HepG2 (cell line): ENCODE measurements at regions of chr5 and their contacts with region 1.

Region 1: GRCh38 chr5:140401362-140402257 is at the start of gene ANKHD1:
- DNase-seq: peak; percentile 100
- ATAC-seq: peak; percentile 82
- H3K4me3 ChIP-seq: peak within 1 kb of the TSS; percentile 80 to 97 (median 95)
- H3K27ac ChIP-seq: peak within 1 kb of the TSS; percentile 97
- H3K4me1 ChIP-seq: peaks cover 49% of the 10 kb centered on the region
- H3K27me3 ChIP-seq: no peaks in the 10 kb centered on the region; a peak in 1 of 5 replicates
- CTCF ChIP-seq: no peak
- EP300 ChIP-seq: no peak; a peak in 1 of 4 replicates
- POLR2A ChIP-seq: peak; percentile 90 to 92
- RAD21 ChIP-seq: peak; percentile 16; the same call in 1 of the 2 replicates
- total RNA-seq, gene ANKHD1: 69.9 and 101 TPM in 2 replicates

Region 2: GRCh38 chr5:140174465-140175366 is 226.9 kb before region 1 on chr5 and contains the start of gene CYSTM1:
- CTCF ChIA-PET with region 1: no interaction called
- POLR2A ChIA-PET with region 1: interaction called, 3 read pairs
- in situ Hi-C with region 1: no loop called
- intact Hi-C with region 1: loop called (anchors 1 kb)
- DNase-seq: peak; percentile 89
- ATAC-seq: peak; percentile 84
- H3K4me3 ChIP-seq: peak within 1 kb of the TSS; percentile 84 to 96 (median 89)
- H3K27ac ChIP-seq: peak within 1 kb of the TSS; percentile 89
- H3K4me1 ChIP-seq: peaks cover 61% of the 10 kb centered on the region
- H3K27me3 ChIP-seq: no peaks in the 10 kb centered on the region; a peak in 1 of 5 replicates
- CTCF ChIP-seq: no peak
- EP300 ChIP-seq: no peak
- POLR2A ChIP-seq: peak; percentile 74 to 81; a peak in 3 of 4 replicates
- RAD21 ChIP-seq: 0 out of 2 replicates have a peak, but pooled peaks have one; percentile 15
- total RNA-seq, gene CYSTM1: 40.0 and 52.7 TPM in 2 replicates

Region 3: GRCh38 chr5:140418862-140419520 is 17.4 kb after region 1 on chr5:
- CTCF ChIA-PET with region 1: no interaction called
- POLR2A ChIA-PET with region 1: interaction called, 6 read pairs
- in situ Hi-C with region 1: no loop called
- intact Hi-C with region 1: loop called (anchors 2 kb)
- DNase-seq: no peak
- ATAC-seq: no peak
- H3K4me3 ChIP-seq: no peak overlapping the region
- H3K27ac ChIP-seq: no peak overlapping the region
- H3K4me1 ChIP-seq: peaks cover 38% of the 10 kb centered on the region
- H3K27me3 ChIP-seq: no peaks in the 10 kb centered on the region
- CTCF ChIP-seq: no peak
- EP300 ChIP-seq: no peak
- POLR2A ChIP-seq: no peak
- RAD21 ChIP-seq: no peak

Region 4: GRCh38 chr5:140547508-140548299 is 146.1 kb after region 1 on chr5 and contains the start of gene EIF4EBP3:
- CTCF ChIA-PET with region 1: no interaction called
- POLR2A ChIA-PET with region 1: interaction called, 11 read pairs
- in situ Hi-C with region 1: no loop called
- intact Hi-C with region 1: no loop called
- DNase-seq: peak; percentile 94
- ATAC-seq: peak; percentile 94
- H3K4me3 ChIP-seq: peak within 1 kb of the TSS; percentile 21 to 69 (median 48); a peak in 5 of 6 replicates
- H3K27ac ChIP-seq: peak within 1 kb of the TSS; percentile 86
- H3K4me1 ChIP-seq: peaks cover 27% of the 10 kb centered on the region
- H3K27me3 ChIP-seq: no peaks in the 10 kb centered on the region
- CTCF ChIP-seq: peak; percentile 62
- EP300 ChIP-seq: no peak
- POLR2A ChIP-seq: peak; percentile 3 to 58
- RAD21 ChIP-seq: peak; percentile 73
- total RNA-seq, gene EIF4EBP3: 1.7 and 1.9 TPM in 2 replicates

Region 5: GRCh38 chr5:140639148-140639979 is 237.8 kb after region 1 on chr5 and contains the start of gene TMCO6:
- CTCF ChIA-PET with region 1: no interaction called
- POLR2A ChIA-PET with region 1: interaction called, 14 read pairs
- in situ Hi-C with region 1: no loop called
- intact Hi-C with region 1: loop called (anchors 10 kb)
- DNase-seq: peak; percentile 99
- ATAC-seq: peak; percentile 90
- H3K4me3 ChIP-seq: peak within 1 kb of the TSS; percentile 67 to 89 (median 71)
- H3K27ac ChIP-seq: peak within 1 kb of the TSS; percentile 94
- H3K4me1 ChIP-seq: peaks cover 67% of the 10 kb centered on the region
- H3K27me3 ChIP-seq: no peaks in the 10 kb centered on the region
- CTCF ChIP-seq: peak; percentile 82
- EP300 ChIP-seq: peak; percentile 86 to 94; a peak in 3 of 4 replicates
- POLR2A ChIP-seq: peak in 1 of 2 experiments; percentile 90; a peak in 3 of 4 replicates
- RAD21 ChIP-seq: peak; percentile 66; the same call in 1 of the 2 replicates
- total RNA-seq, gene TMCO6: 8.2 and 16.6 TPM in 2 replicates

Region 6: DNA sequence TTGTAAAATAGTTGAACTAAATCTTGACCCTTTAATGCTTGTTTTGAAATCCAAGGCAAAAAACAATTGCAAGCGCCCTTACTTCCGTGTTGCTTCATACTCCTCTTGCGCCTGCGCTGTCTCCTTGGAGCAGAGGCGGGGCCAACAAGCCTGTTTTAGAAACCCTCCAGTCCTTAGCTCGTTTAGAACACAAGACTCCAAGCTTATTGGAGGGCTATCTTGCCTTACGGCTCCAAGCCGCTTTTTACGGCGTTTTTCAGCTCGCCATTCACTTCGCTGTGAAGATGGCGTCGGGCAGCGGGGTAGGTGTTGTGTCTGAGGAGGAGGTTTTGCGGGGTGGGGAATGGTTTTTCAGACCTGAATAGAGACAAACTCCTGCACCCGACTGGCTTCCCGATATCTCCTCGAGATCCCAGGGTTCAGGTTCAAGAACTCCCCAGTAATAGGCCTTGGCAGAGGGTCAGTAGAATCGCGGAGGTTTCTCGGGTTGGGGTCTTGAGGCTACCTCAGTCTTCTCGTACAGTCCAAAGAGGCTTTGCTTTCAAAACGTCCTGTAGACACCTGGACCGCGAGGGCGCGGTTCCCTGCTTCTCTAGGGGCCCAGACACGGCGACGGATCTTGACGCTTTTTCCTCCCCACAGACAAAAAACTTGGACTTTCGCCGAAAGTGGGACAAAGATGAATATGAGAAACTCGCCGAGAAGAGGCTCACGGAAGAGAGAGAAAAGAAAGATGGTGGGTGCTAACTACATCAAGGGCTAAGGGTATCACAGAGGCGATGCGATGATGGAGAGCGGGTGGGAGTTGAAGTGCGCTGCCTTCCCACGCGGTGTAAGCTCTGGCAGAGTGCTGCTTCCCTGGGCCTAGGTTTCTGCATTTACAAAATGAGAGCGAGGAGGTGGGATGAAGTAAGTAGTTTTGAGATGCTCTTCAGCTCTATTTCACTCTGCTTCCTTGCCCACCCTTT is 298.9 kb after region 1 on chr5 and contains the start of gene ZMAT2:
- CTCF ChIA-PET with region 1: no interaction called
- POLR2A ChIA-PET with region 1: interaction called, 13 read pairs
- in situ Hi-C with region 1: no loop called
- intact Hi-C with region 1: no loop called
- DNase-seq: peak; percentile 97
- ATAC-seq: peak; percentile 97
- H3K4me3 ChIP-seq: peak within 1 kb of the TSS; percentile 71 to 94 (median 82)
- H3K27ac ChIP-seq: peak within 1 kb of the TSS; percentile 71
- H3K4me1 ChIP-seq: peaks cover 18% of the 10 kb centered on the region
- H3K27me3 ChIP-seq: no peaks in the 10 kb centered on the region; a peak in 1 of 5 replicates
- CTCF ChIP-seq: no peak
- EP300 ChIP-seq: no peak
- POLR2A ChIP-seq: peak; percentile 72 to 84
- RAD21 ChIP-seq: no peak
- total RNA-seq, gene ZMAT2: 92.8 and 141 TPM in 2 replicates

Region 7: DNA sequence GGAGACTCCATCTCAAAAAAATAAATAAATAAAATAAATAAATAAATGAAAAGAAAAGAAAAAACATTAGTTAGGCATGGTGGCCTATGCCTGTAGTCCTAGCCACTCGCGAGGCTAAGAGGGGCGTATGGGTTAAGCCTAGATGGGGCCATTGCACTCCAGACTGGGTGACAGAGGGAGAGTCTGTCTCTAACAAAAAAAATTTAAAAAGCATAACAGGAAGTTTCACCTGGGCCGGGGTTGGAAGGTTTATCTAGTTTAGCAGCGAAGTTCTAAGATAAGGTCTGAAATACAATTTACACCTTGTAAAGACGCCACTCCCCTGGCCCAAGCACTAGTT is 316.6 kb after region 1 on chr5:
- CTCF ChIA-PET with region 1: no interaction called
- POLR2A ChIA-PET with region 1: interaction called, 17 read pairs
- in situ Hi-C with region 1: no loop called
- intact Hi-C with region 1: loop called (anchors 2 kb)
- DNase-seq: no peak
- ATAC-seq: peak; percentile 2; the same call in 2 of the 3 replicates
- H3K4me3 ChIP-seq: peak overlapping the region; percentile 23 to 64 (median 60); a peak in 5 of 6 replicates
- H3K27ac ChIP-seq: peak overlapping the region; percentile 79
- H3K4me1 ChIP-seq: peaks cover 16% of the 10 kb centered on the region
- H3K27me3 ChIP-seq: no peaks in the 10 kb centered on the region
- CTCF ChIP-seq: no peak
- EP300 ChIP-seq: no peak
- POLR2A ChIP-seq: no peak; a peak in 1 of 4 replicates
- RAD21 ChIP-seq: no peak